MCF 10A (cell line): ENCODE measurements at regions of chr1 and their contacts with region 1.

Region 1: GRCh38 chr1:114346480-114347029 is 164.4 kb downstream of the TRIM33 start:
- DNase-seq: peak; percentile 93
- H3K4me3 Mint-ChIP-seq: peak overlapping the region; percentile 84
- H3K27ac Mint-ChIP-seq: peak overlapping the region; percentile 85
- H3K4me1 Mint-ChIP-seq: peaks cover 4% of the 10 kb centered on the region
- H3K27me3 Mint-ChIP-seq: no peaks in the 10 kb centered on the region
- CTCF ChIP-seq: peak; percentile 100

Region 2: DNA sequence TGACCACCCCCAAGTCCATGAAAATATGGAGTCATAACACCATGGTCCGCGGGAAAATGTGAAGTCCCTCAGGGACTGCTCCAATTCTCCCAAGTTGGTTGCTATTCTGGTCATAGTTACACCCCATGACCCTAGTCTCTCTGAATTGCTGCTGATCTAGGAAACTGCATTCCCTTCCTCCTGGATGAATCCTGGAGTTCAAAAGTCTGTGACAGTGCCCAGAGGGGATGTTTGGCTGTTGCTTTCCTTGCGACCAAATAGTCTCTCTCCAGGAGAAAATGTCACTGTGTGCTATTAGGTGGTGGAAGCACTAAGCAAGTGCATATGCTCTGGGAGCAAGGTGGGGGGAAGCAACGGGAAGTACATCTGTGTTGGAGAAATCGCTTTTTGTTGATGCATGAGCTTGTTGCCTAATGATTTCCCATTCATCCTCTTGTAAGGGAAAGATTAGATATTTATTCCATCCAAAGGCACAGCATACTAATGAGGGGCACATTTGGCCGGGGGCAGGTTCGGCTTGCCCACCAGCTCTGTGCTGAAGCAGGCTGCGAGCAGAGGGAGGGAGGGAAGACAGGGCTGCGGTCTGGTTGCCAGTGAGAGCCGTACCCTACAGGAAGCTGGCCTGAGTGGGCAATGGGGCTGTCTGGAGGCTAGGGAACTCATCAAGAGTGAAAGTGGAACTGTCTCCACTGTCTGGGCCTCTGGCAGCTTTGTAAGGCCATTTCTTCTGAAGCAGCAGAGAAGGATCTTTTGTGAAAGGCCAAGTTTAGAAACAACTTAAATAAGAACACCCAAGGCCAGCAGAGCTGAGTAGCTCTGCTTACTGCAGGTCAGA is 220.1 kb before region 1 on chr1:
- CTCF ChIA-PET with region 1: no interaction called
- POLR2A ChIA-PET with region 1: no interaction called
- intact Hi-C with region 1: no loop called
- DNase-seq: no peak
- H3K4me3 Mint-ChIP-seq: no peak overlapping the region
- H3K27ac Mint-ChIP-seq: no peak overlapping the region
- H3K4me1 Mint-ChIP-seq: peaks cover 14% of the 10 kb centered on the region
- H3K27me3 Mint-ChIP-seq: peaks cover 27% of the 10 kb centered on the region
- CTCF ChIP-seq: no peak

Region 3: GRCh38 chr1:114215436-114215835 is 131.1 kb before region 1 on chr1:
- CTCF ChIA-PET with region 1: no interaction called
- POLR2A ChIA-PET with region 1: no interaction called
- intact Hi-C with region 1: no loop called
- DNase-seq: no peak
- H3K4me3 Mint-ChIP-seq: no peak overlapping the region
- H3K27ac Mint-ChIP-seq: no peak overlapping the region
- H3K4me1 Mint-ChIP-seq: no peaks in the 10 kb centered on the region
- H3K27me3 Mint-ChIP-seq: peaks cover 25% of the 10 kb centered on the region
- CTCF ChIP-seq: no peak

Region 4: GRCh38 chr1:114262337-114262736 is 84.2 kb before region 1 on chr1:
- CTCF ChIA-PET with region 1: no interaction called
- POLR2A ChIA-PET with region 1: no interaction called
- intact Hi-C with region 1: no loop called
- DNase-seq: no peak
- H3K4me3 Mint-ChIP-seq: no peak overlapping the region
- H3K27ac Mint-ChIP-seq: no peak overlapping the region
- H3K4me1 Mint-ChIP-seq: no peaks in the 10 kb centered on the region
- H3K27me3 Mint-ChIP-seq: peaks cover 41% of the 10 kb centered on the region
- CTCF ChIP-seq: no peak

Region 5: DNA sequence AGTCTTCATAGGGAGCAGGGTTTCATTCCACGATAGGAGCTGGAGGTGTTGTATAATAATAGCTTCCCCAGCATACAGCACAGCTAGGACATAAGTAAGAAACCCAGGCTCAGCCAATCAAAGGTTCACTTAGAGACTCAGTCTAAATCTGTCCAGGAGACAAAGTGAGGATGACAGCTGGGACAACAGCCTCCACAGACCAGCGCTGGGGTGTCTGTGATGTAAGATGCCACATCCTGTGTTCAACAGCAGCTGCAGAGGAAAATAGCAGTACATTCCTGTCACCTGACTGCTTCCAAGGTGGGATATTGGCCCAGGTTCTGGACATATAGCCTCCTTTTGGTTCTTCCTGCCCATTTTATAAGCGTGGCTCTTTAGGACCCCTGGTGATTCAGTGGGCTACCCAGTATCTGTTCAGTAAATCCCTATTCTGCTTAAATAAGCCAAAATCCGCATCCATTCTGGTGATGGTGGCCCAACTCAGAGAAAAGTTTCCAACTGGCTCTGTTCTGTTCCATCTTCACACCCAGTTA is 16.0 kb before region 1 on chr1:
- CTCF ChIA-PET with region 1: interaction called, 15 read pairs
- POLR2A ChIA-PET with region 1: interaction called, 4 read pairs
- intact Hi-C with region 1: no loop called
- DNase-seq: no peak
- H3K4me3 Mint-ChIP-seq: no peak overlapping the region
- H3K27ac Mint-ChIP-seq: no peak overlapping the region
- H3K4me1 Mint-ChIP-seq: no peaks in the 10 kb centered on the region
- H3K27me3 Mint-ChIP-seq: peaks cover 65% of the 10 kb centered on the region
- CTCF ChIP-seq: no peak

Region 6: DNA sequence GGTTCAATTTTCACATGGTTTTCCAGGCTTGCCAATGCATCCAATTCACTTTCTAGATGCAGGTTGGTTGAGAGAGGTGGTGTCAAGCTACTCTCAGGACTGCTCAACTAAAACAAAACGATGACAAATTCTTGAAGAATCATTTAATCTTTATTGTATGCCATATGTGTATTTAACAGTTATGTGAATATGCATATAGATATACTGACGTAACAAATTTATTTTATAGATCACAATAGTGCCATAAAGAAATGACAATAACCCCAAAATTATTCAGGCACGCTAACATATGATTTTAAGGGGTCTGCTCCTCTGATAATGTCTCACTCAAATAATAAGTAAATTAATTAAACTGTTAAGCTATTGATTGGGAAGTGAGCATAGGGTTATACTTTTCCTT is 59.1 kb after region 1 on chr1:
- CTCF ChIA-PET with region 1: interaction called, 11 read pairs
- POLR2A ChIA-PET with region 1: no interaction called
- intact Hi-C with region 1: no loop called
- DNase-seq: no peak
- H3K4me3 Mint-ChIP-seq: no peak overlapping the region
- H3K27ac Mint-ChIP-seq: no peak overlapping the region
- H3K4me1 Mint-ChIP-seq: no peaks in the 10 kb centered on the region
- H3K27me3 Mint-ChIP-seq: no peaks in the 10 kb centered on the region
- CTCF ChIP-seq: no peak

Region 7: DNA sequence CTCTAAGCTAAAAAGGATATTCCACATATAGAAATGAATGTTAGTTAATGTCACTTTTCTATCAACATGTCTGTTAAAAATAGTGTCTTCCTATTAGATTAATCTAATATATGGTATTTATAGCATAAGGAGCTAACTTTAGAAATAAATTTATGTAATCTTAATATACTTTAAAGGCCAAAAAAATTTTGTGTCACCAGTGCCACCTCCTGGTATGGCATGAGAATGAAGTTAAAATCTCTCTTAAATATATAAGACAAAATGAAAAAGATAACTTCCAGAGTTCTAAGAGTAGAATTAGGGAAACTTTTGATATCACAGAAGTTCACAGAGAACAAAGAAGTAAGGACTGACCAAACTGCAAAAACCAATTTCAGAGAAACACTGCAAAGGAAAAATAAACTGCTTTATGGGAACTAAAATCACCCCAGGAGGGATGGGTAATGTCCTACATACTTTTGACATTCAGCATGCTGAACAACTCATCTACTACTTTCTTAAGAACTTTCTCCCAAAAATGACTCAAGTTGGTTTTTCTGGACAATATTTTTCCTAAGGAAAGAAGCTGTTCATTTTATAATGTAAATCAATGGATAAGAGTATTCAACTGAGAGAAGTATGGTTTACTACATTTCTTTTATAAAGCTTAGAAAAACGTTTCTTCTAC is 81.7 kb after region 1 on chr1:
- CTCF ChIA-PET with region 1: interaction called, 39 read pairs
- POLR2A ChIA-PET with region 1: no interaction called
- intact Hi-C with region 1: loop called (anchors 1 kb)
- DNase-seq: peak; percentile 19
- H3K4me3 Mint-ChIP-seq: no peak overlapping the region
- H3K27ac Mint-ChIP-seq: no peak overlapping the region
- H3K4me1 Mint-ChIP-seq: no peaks in the 10 kb centered on the region
- H3K27me3 Mint-ChIP-seq: no peaks in the 10 kb centered on the region
- CTCF ChIP-seq: peak; percentile 39

Region 8: GRCh38 chr1:115041654-115042053 is 695.1 kb after region 1 on chr1:
- CTCF ChIA-PET with region 1: no interaction called
- POLR2A ChIA-PET with region 1: no interaction called
- intact Hi-C with region 1: loop called (anchors 10 kb)
- DNase-seq: peak; percentile 51
- H3K4me3 Mint-ChIP-seq: no peak overlapping the region
- H3K27ac Mint-ChIP-seq: no peak overlapping the region
- H3K4me1 Mint-ChIP-seq: no peaks in the 10 kb centered on the region
- H3K27me3 Mint-ChIP-seq: peaks cover 28% of the 10 kb centered on the region
- CTCF ChIP-seq: peak; percentile 39

Region 9: GRCh38 chr1:115411371-115412063 is 1065.0 kb after region 1 on chr1:
- CTCF ChIA-PET with region 1: no interaction called
- POLR2A ChIA-PET with region 1: no interaction called
- intact Hi-C with region 1: no loop called
- DNase-seq: peak; percentile 88
- H3K4me3 Mint-ChIP-seq: no peak overlapping the region
- H3K27ac Mint-ChIP-seq: no peak overlapping the region
- H3K4me1 Mint-ChIP-seq: peaks cover 18% of the 10 kb centered on the region
- H3K27me3 Mint-ChIP-seq: no peaks in the 10 kb centered on the region
- CTCF ChIP-seq: no peak